CD4-positive, alpha-beta T cell (primary cell): ENCODE measurements at regions of chr11 and their contacts with region 1.

Region 1: DNA sequence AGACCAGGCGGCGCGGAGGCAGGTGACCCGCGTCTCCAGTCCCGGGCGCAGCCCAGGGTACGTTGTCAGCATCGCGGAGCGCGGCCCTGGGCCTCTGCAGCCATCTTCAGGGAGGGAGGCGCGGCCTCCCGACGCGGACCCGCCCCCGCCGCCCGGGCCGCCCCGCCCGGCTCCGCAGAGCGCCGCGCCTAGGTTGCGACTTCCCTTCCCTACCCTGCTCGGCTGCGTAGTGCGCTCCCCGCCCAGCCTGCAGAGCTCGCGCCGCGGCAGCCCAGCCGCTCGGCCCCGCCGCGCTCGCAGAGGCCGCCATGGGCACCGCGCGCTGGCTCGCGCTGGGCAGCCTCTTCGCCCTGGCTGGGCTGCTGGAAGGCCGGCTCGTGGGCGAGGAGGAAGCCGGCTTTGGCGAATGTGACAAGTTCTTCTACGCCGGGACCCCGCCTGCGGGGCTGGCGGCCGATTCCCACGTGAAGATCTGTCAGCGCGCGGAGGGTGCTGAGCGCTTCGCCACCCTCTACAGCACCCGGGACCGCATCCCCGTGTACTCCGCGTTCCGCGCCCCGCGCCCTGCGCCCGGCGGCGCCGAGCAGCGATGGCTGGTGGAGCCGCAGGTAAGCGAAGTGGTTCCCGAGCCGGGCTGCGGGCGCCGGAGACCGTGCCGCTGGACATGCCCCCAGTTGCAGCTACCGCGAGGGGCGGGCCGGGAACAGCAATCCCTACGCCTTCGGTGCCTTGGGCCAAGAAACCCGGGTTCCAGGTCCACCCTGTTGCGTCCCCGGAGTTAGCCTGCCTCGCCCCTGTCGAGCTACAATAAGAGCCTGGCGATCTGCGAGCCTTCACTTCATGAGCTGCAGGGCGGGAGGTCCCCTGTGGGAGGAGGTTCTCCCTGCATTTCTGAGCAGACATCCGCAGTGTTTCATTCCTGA is at the start of gene ENDOD1:
- DNase-seq: peak; percentile 70 to 94 (median 84)
- ATAC-seq: peak; percentile 94
- H3K4me3 ChIP-seq: peak within 1 kb of the TSS; percentile 78
- H3K4me3 Mint-ChIP-seq: peak within 1 kb of the TSS; percentile 92
- H3K27ac ChIP-seq: peak within 1 kb of the TSS; percentile 77 to 84
- H3K27ac Mint-ChIP-seq: peak within 1 kb of the TSS; percentile 95
- H3K4me1 ChIP-seq: peaks cover 34% of the 10 kb centered on the region
- H3K4me1 Mint-ChIP-seq: peaks cover 50% of the 10 kb centered on the region
- H3K27me3 ChIP-seq: no peaks in the 10 kb centered on the region
- H3K27me3 Mint-ChIP-seq: no peaks in the 10 kb centered on the region
- CTCF ChIP-seq: no peak
- total RNA-seq, gene ENDOD1: 3.8 to 4.4 TPM

Region 2: GRCh38 chr11:94543695-94544645 is 545.9 kb before region 1 on chr11 and contains the start of gene FUT4:
- CTCF ChIA-PET with region 1: no interaction called
- POLR2A ChIA-PET with region 1: interaction called, 3 read pairs
- intact Hi-C with region 1: loop called in 1 of 2 experiments (anchors 5 kb)
- DNase-seq: peak; percentile 46 to 84 (median 62)
- ATAC-seq: peak; percentile 79
- H3K4me3 ChIP-seq: peak within 1 kb of the TSS; percentile 82
- H3K4me3 Mint-ChIP-seq: peak within 1 kb of the TSS; percentile 99
- H3K27ac ChIP-seq: peak within 1 kb of the TSS; percentile 61 to 93
- H3K27ac Mint-ChIP-seq: peak within 1 kb of the TSS; percentile 95
- H3K4me1 ChIP-seq: peaks cover 33% of the 10 kb centered on the region
- H3K4me1 Mint-ChIP-seq: peaks cover 51% of the 10 kb centered on the region
- H3K27me3 ChIP-seq: no peaks in the 10 kb centered on the region
- H3K27me3 Mint-ChIP-seq: no peaks in the 10 kb centered on the region
- CTCF ChIP-seq: peak; percentile 5
- total RNA-seq, gene FUT4: 4.3 to 5.1 TPM

Region 3: GRCh38 chr11:95076416-95076815 is 13.5 kb before region 1 on chr11:
- CTCF ChIA-PET with region 1: interaction called, 67 read pairs
- POLR2A ChIA-PET with region 1: interaction called, 32 read pairs
- intact Hi-C with region 1: no loop called
- DNase-seq: no peak
- ATAC-seq: no peak
- H3K4me3 ChIP-seq: no peak overlapping the region
- H3K4me3 Mint-ChIP-seq: no peak overlapping the region
- H3K27ac ChIP-seq: no peak overlapping the region
- H3K27ac Mint-ChIP-seq: no peak overlapping the region
- H3K4me1 ChIP-seq: no peaks in the 10 kb centered on the region
- H3K4me1 Mint-ChIP-seq: peaks cover 5% of the 10 kb centered on the region
- H3K27me3 ChIP-seq: no peaks in the 10 kb centered on the region
- H3K27me3 Mint-ChIP-seq: no peaks in the 10 kb centered on the region
- CTCF ChIP-seq: no peak